Activated T-helper 1 cell treated with anti-CD3 and anti-CD28 coated beads, Interleukin-12 subunit alpha, Interleukin-12 subunit beta, Interleukin-2, Interleukin-4 antibody, amounts not matched to agents 30 ng/mL and 10 ng/mL and 1 ng/mL, durations not matched to agents 14 hours and 24 hours and 36 hours (primary cell): ENCODE measurements at regions of chr6 and their contacts with region 1.

Region 1: GRCh38 chr6:118283766-118284165 is 264.3 kb upstream of the PLN start:
- DNase-seq: peak; percentile 7
- H3K4me3 Mint-ChIP-seq: no peak overlapping the region
- H3K27ac Mint-ChIP-seq: no peak overlapping the region
- H3K4me1 Mint-ChIP-seq: no peaks in the 10 kb centered on the region
- H3K27me3 Mint-ChIP-seq: peaks cover 18% of the 10 kb centered on the region

Region 2: GRCh38 chr6:118344014-118344670 is 60.4 kb after region 1 on chr6:
- intact Hi-C with region 1: no loop called
- DNase-seq: no peak
- H3K4me3 Mint-ChIP-seq: no peak overlapping the region
- H3K27ac Mint-ChIP-seq: no peak overlapping the region
- H3K4me1 Mint-ChIP-seq: no peaks in the 10 kb centered on the region
- H3K27me3 Mint-ChIP-seq: no peaks in the 10 kb centered on the region

Region 3: DNA sequence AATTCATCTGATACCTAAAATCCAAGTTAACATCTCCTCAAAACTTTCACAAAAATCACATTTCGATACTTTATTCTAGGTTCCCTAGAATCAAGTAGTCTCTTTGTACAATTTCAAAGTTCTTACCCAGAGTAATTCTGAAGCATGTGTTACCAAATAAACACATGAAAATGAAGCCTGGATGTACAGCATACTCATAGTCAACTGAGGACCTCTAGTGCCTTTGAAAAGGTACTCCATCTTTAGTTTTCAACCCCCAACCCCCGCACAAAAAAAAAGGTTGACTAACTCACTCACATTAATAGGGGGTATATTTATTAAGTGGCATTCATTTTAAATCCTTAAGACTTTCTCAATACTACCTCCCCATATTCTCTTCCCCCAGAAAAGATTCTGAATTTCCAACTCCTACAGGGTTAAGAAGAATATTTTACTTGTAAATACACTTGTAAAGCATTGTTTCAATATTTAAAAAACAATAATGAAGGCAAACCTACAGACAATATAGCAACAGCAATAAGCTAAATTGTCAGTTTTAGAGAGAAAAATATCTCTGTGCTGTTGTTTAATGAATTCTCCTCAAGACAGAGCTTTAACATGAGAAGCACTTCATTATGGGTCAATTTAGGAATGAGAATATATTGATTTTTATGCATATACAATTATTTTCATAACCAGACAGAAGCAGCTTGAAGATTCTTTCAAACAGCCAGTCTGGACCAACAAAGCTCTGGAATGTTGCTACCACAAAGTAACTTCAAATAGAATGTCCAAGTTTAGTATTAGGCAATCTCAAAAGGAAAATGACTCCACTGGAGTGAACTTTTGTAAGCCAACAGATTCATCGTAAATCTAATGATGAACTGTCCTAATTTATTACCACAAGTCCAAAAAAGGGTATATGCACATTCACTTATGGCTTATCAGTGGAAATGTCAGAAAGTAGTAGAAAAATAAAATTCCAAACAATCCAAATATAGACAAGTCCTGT is 267.6 kb after region 1 on chr6:
- intact Hi-C with region 1: loop called (anchors 1 kb)
- DNase-seq: no peak
- H3K4me3 Mint-ChIP-seq: no peak overlapping the region
- H3K27ac Mint-ChIP-seq: no peak overlapping the region
- H3K4me1 Mint-ChIP-seq: peaks cover 17% of the 10 kb centered on the region
- H3K27me3 Mint-ChIP-seq: no peaks in the 10 kb centered on the region

Region 4: DNA sequence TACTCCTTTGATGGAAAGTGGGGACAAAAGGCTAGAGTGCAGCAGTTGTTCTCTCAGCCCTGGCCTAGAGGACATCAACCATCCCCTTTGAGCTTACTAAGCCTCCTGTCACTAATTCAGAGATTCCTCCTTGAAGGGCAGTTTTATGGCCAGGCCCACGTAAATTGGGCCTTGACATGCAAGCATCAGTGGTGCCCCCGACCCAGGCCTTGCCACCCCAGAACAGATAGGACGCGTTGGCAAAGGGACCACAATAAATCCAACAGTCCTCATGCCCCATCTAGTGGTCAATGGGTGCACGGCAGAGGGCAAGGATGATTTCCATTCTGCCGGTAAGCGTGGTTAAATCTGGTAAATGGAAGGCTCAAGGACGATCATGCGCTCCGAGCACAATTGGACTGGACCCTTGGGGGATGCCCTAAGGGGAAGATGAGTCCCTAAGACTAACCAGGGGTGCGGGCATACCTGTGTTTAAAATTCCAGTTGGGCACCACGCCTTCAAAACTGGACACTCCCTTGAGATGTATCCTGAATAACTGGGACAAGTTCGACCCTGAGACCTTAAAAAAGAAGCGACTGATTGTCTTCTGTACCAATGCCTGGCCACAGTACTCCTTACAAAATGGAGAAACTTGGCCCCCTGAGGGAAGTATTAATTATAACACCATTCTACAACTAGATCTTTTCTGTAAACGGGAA is 335.1 kb after region 1 on chr6:
- intact Hi-C with region 1: loop called (anchors 1 kb)
- DNase-seq: peak; percentile 30
- H3K4me3 Mint-ChIP-seq: no peak overlapping the region
- H3K27ac Mint-ChIP-seq: peak overlapping the region; percentile 55
- H3K4me1 Mint-ChIP-seq: peaks cover 29% of the 10 kb centered on the region
- H3K27me3 Mint-ChIP-seq: no peaks in the 10 kb centered on the region

Region 5: DNA sequence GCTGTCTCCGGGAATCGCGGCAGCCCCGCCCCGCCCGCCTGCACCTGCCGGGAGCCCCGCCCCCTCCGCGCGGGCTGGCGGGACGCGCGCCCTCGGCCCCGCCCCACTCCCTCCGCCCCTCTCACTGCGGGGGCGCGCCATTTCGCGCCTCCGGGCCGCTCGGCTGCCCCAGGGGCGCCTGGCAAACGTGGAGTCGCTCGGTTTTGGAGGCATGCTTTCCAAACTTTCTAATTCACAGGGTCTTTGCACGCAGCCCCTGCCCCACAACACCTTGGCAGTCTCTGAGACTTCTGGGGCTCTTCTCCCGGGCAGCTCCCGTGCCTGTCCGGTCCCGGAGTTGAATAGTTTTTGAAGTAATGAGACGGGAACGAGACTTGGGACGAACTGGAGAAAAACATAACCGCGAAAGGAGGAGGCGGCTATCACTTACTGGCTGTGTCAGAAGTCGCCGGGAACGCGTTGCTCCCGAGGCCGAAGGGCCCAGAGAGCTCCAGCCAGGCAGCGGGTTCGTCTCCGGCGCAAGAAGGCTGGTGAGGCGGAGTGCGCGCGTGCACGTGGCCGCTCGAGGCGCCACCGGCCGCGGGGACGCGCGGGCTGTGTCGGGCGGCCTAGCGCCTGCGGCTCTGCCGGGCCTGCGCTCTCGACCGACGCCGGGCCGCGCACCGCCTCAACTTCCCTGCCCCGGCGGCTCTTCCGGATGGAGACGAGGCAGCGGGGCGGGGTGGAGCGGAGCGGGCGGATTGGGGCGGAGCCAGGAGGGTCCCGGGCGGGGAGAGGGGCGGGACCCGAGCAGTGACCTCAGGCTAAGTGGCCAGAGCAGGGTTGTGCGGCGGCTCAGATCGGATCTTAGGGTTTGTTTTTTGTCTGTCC is 650.9 kb after region 1 on chr6 and contains the start of gene MCM9:
- intact Hi-C with region 1: loop called (anchors 10 kb)
- DNase-seq: peak; percentile 86
- H3K4me3 Mint-ChIP-seq: peak within 1 kb of the TSS; percentile 91
- H3K27ac Mint-ChIP-seq: peak within 1 kb of the TSS; percentile 93
- H3K4me1 Mint-ChIP-seq: peaks cover 40% of the 10 kb centered on the region
- H3K27me3 Mint-ChIP-seq: no peaks in the 10 kb centered on the region
- total RNA-seq, gene MCM9: 19.8 and 24.4 TPM in 2 replicates

Region 6: DNA sequence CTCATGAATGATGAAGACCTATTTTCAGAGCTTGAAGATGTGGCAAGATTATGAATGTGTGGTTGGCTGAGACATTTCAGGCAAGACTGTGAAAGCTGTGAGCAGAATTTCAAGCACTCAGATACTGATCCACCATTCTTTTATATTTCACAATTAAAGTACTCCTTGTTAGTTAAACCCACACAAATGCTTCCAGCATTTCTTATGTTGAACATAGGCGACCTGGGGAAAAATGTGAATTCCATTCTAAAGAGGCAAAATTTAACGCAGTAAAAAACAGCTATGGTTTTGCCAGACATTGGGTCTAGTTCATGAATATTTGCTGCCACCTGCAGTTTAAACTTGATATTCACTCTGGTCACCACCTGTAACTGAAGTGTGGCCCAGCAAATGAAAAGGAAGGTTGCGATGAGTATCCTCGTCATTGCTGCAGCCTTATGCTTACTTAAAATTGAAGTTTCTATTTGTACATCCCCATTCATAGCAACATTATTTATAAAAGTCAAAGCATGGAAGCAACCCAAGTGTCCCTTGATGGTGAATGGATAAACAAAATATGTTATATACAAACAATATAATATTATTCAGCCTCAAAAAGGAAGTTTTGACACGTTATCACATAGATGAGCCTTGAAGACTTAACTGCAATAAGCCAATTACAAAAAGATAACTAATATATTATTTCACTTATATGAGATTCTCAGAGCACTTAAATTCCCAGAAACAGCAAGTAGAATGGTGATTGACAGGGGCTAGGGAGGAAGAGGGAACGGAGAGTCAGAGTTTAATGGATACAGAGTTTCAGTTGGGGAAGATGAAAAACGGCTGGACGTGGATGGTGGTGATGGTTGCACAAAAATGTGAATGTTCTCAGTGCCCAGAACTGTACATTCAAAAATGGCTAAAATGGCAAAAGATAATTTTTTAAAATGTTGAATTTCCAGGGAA is 827.1 kb after region 1 on chr6:
- intact Hi-C with region 1: loop called (anchors 1 kb)
- DNase-seq: peak; percentile 31
- H3K4me3 Mint-ChIP-seq: no peak overlapping the region
- H3K27ac Mint-ChIP-seq: no peak overlapping the region
- H3K4me1 Mint-ChIP-seq: peaks cover 17% of the 10 kb centered on the region
- H3K27me3 Mint-ChIP-seq: peaks cover 3% of the 10 kb centered on the region